ENCODE measurements at regions of chr2 and their contacts with region 1.

Region 1: DNA sequence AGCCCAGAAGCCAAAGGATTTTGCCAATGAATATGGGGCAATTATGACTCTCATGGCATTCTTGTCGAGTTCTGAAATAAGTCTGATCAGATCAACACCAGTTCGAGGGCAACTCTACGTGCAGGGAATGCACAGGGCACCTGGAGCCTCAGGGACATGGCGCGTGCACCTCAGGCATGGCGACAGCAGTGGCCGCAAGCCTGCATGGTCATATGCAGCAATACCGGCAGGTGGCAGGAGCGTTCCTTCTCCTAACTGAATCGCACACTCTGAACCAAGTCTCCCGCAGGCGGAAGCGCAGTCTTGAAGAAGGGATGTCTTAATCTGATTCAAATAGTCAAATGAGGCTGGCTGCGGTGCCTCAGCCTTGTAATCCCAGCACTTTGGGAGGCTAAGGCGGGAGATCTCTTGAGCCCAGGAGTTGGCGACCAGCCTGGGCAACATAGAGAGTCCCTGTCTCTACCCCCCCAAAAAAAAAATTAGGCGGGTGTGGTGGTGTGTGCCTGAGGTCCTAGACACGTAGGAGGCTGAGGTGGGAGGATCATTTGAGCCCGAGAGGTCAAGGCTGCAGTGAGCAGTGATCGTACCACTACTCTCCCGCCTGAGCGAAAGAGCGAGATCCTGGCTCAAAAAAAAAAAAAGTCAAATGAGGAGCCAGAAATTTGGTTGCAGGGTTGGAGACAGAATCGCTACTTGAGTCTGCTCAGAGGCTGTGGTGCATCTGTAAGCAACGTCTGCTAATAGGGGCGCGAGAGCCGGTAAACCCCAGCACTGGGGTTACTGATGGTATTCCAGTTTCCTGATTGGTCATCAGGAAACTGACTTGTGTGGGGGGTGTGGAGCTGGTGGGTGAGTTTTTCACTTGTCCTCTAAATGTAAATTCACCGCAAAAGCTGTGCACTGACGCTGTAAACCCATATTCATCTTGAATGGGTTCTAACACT is 28.8 kb downstream of the FHL2 start:
- DNase-seq: peak; percentile 38 to 91
- H3K4me3 ChIP-seq: no peak overlapping the region
- H3K27ac ChIP-seq: no peak overlapping the region
- H3K4me1 ChIP-seq: peaks cover 2 to 10% of the 10 kb centered on the region in 2 donors
- H3K27me3 ChIP-seq: no peaks in the 10 kb centered on the region
- CTCF ChIP-seq: peak; percentile 85 to 90 (median 89)

Region 2: DNA sequence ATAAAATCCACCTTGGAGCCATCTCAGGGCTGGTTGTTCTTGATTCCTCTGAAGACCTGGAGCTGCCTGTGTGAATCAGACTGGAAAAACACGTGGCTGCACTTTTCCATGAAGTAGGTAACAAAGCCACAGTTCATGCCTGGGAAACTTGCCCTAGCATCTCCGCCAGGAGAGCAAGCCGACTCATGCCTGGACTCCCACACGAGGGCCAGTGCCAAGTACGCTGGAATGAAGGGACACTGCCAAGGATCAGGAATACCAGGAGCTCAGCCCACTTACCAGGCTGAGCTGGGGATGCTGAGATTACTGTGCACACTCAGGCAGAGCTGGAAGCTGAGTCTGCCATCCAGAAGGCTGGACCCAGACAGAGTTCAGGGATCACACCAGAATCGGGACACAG is 39.7 kb after region 1 on chr2:
- intact Hi-C with region 1: loop called (anchors 5 kb)
- DNase-seq: peak; percentile 70 to 96
- H3K4me3 ChIP-seq: no peak overlapping the region
- H3K27ac ChIP-seq: peak overlapping the region; percentile 68 to 74
- H3K4me1 ChIP-seq: peaks cover 9 to 31% of the 10 kb centered on the region in 2 donors
- H3K27me3 ChIP-seq: no peaks in the 10 kb centered on the region
- CTCF ChIP-seq: no peak

Region 3: GRCh38 chr2:105521205-105521604 is 151.2 kb after region 1 on chr2:
- intact Hi-C with region 1: loop called (anchors 1 kb)
- DNase-seq: no peak
- H3K4me3 ChIP-seq: no peak overlapping the region
- H3K27ac ChIP-seq: no peak overlapping the region
- H3K4me1 ChIP-seq: peaks cover 5 to 9% of the 10 kb centered on the region in 2 donors
- H3K27me3 ChIP-seq: no peaks in the 10 kb centered on the region
- CTCF ChIP-seq: peak; percentile 25 to 66 (median 53)

Region 4: GRCh38 chr2:106038601-106039375 is 668.8 kb after region 1 on chr2:
- intact Hi-C with region 1: no loop called
- DNase-seq: no peak
- H3K4me3 ChIP-seq: no peak overlapping the region
- H3K27ac ChIP-seq: no peak overlapping the region
- H3K4me1 ChIP-seq: no peaks in the 10 kb centered on the region
- H3K27me3 ChIP-seq: no peaks in the 10 kb centered on the region
- CTCF ChIP-seq: no peak